ENCODE measurements at regions of chr1 and their contacts with region 1.

Region 1: GRCh38 chr1:15110875-15111230 is 42.7 kb upstream of the TMEM51 start:
- DNase-seq: no peak
- ATAC-seq: peak; percentile 64; the same call in 1 of the 2 replicates
- H3K4me3 ChIP-seq: no peak overlapping the region
- H3K27ac ChIP-seq: no peak overlapping the region
- H3K4me1 ChIP-seq: no peaks in the 10 kb centered on the region
- H3K27me3 ChIP-seq: no peaks in the 10 kb centered on the region
- CTCF ChIP-seq: peak; percentile 34 to 46 (median 40); a peak in 4 of 6 replicates
- POLR2A ChIP-seq: no peak
- RAD21 ChIP-seq: peak; percentile 59

Region 2: GRCh38 chr1:15304701-15305467 is 194.0 kb after region 1 on chr1:
- CTCF ChIA-PET with region 1: interaction called, 5 read pairs
- POLR2A ChIA-PET with region 1: no interaction called
- RAD21 ChIA-PET with region 1: no interaction called
- intact Hi-C with region 1: loop called (anchors 1 kb)
- DNase-seq: peak; percentile 26
- ATAC-seq: peak; percentile 95
- H3K4me3 ChIP-seq: no peak overlapping the region
- H3K27ac ChIP-seq: no peak overlapping the region
- H3K4me1 ChIP-seq: peaks cover 0 to 6% of the 10 kb centered on the region in 2 experiments; a peak in 2 of 4 replicates
- H3K27me3 ChIP-seq: no peaks in the 10 kb centered on the region
- CTCF ChIP-seq: peak; percentile 70 to 100 (median 86)
- POLR2A ChIP-seq: no peak
- RAD21 ChIP-seq: peak; percentile 90